ENCODE measurements at regions of chr11 and their contacts with region 1.

Region 1: DNA sequence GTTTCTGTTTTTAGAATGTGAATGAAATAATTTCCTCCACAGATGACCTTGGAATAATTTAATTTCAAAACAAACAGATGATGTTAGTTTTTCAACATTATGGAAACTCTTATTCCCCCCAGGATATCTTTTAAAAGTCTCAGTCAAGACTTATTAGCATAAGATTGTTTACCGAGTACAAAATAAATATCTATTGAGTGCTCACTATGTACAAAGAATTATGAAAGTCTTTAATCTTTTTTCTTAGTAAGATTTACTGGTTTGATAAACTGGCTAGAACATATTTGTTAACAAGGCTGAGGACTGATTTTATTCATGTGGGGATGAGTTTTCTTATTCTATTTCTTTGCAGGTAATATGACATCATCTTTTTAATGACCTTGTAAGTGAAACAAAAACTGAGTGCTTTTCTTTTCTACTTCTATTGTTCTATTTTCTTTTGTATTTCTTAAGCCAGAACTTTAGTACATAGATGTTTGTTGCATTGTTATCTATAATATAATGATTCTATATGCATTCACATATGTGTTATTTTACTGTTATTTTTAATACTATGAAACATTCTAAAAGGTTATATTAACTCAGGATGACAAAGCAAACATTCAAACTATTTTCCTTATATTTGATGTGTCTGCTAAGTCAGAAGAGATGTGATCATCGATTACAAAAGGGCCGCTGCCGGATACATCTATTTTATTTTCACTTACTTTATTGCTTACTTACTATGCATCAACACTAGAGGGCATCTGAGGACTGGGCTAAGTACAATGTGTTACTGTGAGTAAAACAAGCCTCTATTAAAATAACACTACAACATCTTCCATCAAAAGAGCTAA is 111.0 kb upstream of the ARHGAP42 start:
- DNase-seq: no peak
- H3K4me3 ChIP-seq: no peak overlapping the region
- H3K27ac ChIP-seq: no peak overlapping the region
- H3K4me1 ChIP-seq: no peaks in the 10 kb centered on the region
- H3K27me3 ChIP-seq: no peaks in the 10 kb centered on the region
- CTCF ChIP-seq: peak; percentile 71 to 83 (median 78)
- EP300 ChIP-seq: no peak
- POLR2A ChIP-seq: no peak

Region 2: GRCh38 chr11:100484948-100485347 is 91.1 kb before region 1 on chr11:
- in situ Hi-C with region 1: no loop called
- intact Hi-C with region 1: no loop called
- DNase-seq: no peak
- H3K4me3 ChIP-seq: no peak overlapping the region
- H3K27ac ChIP-seq: no peak overlapping the region
- H3K4me1 ChIP-seq: no peaks in the 10 kb centered on the region
- H3K27me3 ChIP-seq: no peaks in the 10 kb centered on the region
- CTCF ChIP-seq: no peak
- EP300 ChIP-seq: no peak
- POLR2A ChIP-seq: no peak

Region 3: DNA sequence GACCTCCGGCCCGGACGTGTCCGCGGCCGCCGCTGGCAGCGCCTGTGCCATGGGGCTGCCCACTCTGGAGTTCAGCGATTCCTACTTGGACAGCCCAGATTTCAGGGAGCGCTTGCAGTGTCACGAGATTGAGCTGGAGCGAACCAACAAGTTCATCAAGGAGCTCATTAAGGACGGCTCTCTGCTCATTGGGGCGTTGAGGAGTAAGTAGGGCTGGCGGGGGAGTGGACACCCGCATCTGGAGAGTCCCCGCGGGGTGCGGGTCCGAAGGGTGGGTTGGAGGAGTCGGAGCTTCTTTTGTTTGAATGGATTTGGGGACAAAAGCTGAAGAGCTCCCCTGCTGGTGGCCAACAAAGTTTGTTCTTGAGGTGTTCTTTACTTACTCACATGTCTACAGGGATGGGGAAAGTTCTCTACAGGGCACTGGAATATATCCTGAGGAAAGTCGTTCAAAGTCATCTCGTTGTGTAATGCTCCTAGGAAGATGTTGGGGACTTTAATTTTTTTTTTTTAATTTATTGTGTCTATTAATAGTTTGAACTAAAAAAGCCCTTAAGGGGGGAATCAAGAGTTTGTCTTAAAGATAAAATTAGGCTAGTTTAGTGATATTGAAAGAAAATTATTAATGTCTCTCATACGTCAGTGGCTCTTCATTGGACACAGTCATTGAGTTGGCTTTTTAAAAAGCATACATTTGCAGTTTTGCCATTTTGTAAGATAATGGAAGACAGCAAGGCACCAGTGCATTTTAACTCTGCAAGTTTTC is 111.7 kb after region 1 on chr11:
- in situ Hi-C with region 1: no loop called
- intact Hi-C with region 1: loop called (anchors 10 kb)
- DNase-seq: peak; percentile 65
- H3K4me3 ChIP-seq: peak overlapping the region; percentile 54 to 85 (median 80)
- H3K27ac ChIP-seq: peak overlapping the region; percentile 81 to 90 (median 84)
- H3K4me1 ChIP-seq: peaks cover 6 to 50% (median 9%) of the 10 kb centered on the region in 4 donors
- H3K27me3 ChIP-seq: no peaks in the 10 kb centered on the region
- CTCF ChIP-seq: peak; percentile 63 to 84 (median 66)
- EP300 ChIP-seq: no peak
- POLR2A ChIP-seq: no peak

Region 4: DNA sequence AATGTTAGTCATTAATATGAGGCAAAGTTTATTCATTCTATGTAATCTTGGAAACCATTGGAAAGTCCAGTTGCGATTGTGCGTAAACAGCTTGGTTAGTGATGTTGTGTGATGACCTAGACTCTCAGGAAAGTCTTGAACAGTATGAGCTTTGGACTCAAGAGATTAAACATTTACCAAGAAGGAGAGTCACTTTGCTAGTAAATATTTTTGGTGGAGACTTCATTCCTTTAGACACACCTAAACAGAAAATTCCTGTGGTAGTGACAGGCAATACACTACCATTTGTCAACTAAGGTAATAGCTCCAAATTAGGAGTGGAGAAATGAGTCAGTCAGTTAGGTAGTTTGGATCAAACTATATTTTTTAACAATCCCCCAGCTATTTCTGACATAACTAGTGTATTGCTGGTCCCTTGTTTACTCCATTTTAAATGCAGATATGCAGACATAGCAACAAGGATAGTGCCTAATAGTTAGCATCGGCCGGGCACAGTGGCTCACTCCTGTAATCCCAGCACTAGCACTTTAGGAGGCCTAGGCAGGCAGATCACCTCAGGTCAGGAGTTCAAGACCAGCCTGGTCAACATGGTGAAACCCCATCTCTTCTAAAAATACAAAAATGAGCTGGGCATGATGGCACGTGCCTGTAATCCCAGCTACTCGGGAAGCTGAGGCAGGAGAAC is 200.3 kb after region 1 on chr11:
- in situ Hi-C with region 1: no loop called
- intact Hi-C with region 1: no loop called
- DNase-seq: no peak
- H3K4me3 ChIP-seq: no peak overlapping the region
- H3K27ac ChIP-seq: peak overlapping the region; percentile 79 to 87 (median 82)
- H3K4me1 ChIP-seq: peaks cover 0 to 48% (median 23%) of the 10 kb centered on the region in 4 donors
- H3K27me3 ChIP-seq: no peaks in the 10 kb centered on the region
- CTCF ChIP-seq: no peak
- EP300 ChIP-seq: no peak
- POLR2A ChIP-seq: no peak

Region 5: DNA sequence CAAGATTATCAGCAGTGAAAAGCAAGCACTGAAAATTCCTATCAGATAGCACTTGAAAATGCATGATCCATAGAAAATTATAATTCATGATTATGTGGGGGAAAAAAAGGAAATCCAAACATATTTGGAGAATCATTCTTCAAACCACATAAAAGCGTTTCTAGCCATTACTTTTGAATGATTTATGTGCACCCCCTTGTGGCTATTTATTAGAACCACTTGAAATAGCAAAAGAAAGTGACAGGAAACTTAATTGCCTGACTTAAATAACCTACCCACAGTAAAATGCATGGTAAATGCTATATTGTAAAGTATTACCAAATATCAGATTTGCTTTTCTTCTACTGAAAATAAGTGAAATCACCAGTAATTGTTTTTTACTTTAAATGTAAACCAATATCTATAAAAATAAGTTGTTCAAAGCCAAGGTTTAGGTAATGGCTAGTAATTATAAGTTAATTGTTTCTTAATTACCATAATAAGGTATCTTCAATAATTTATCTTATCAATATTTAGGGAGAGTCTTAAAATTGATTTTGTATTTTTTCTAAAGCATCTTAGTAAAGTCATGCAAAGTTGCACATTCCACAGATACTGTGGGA is 279.5 kb after region 1 on chr11:
- in situ Hi-C with region 1: loop called (anchors 5 to 25 kb)
- intact Hi-C with region 1: no loop called
- DNase-seq: no peak
- H3K4me3 ChIP-seq: no peak overlapping the region
- H3K27ac ChIP-seq: no peak overlapping the region
- H3K4me1 ChIP-seq: peaks cover 0 to 3% (median 0%) of the 10 kb centered on the region in 4 donors
- H3K27me3 ChIP-seq: no peaks in the 10 kb centered on the region
- CTCF ChIP-seq: peak; percentile 47 to 64 (median 59)
- EP300 ChIP-seq: no peak
- POLR2A ChIP-seq: no peak

Region 6: DNA sequence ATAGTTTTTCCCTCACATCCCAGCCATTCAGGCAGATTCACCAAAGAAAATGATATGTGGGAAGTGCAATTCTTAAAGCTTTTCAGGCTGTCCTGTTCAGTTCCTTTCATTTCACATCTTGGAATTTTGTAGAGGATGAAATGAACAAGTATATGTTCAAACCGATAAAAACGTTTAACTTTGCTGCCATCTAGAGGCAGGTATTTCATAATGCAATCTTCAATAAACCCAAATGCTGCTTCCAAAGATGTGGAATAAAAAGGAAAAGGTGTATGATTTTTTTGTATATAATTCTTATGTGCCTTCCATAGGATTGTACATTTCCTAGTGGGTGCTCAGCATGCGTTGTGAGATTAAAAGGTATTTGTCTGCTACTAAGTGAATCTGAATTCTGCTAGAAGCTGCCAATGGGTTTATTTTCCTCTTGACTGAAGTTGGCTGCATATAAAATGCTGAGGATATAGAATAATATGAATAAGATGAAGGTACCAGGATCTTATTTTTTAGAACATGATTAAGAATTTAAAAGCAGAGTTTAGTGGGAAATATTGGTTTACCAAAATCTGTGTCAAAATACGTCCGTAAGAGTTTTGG is 354.2 kb after region 1 on chr11:
- in situ Hi-C with region 1: loop called (anchors 10 kb)
- intact Hi-C with region 1: loop called (anchors 5 kb)
- DNase-seq: no peak
- H3K4me3 ChIP-seq: no peak overlapping the region
- H3K27ac ChIP-seq: no peak overlapping the region
- H3K4me1 ChIP-seq: no peaks in the 10 kb centered on the region
- H3K27me3 ChIP-seq: no peaks in the 10 kb centered on the region
- CTCF ChIP-seq: peak; percentile 58 to 68 (median 62)
- EP300 ChIP-seq: no peak
- POLR2A ChIP-seq: no peak